PC-3 (cell line): ENCODE measurements at regions of chr2 and their contacts with region 1.

Region 1: DNA sequence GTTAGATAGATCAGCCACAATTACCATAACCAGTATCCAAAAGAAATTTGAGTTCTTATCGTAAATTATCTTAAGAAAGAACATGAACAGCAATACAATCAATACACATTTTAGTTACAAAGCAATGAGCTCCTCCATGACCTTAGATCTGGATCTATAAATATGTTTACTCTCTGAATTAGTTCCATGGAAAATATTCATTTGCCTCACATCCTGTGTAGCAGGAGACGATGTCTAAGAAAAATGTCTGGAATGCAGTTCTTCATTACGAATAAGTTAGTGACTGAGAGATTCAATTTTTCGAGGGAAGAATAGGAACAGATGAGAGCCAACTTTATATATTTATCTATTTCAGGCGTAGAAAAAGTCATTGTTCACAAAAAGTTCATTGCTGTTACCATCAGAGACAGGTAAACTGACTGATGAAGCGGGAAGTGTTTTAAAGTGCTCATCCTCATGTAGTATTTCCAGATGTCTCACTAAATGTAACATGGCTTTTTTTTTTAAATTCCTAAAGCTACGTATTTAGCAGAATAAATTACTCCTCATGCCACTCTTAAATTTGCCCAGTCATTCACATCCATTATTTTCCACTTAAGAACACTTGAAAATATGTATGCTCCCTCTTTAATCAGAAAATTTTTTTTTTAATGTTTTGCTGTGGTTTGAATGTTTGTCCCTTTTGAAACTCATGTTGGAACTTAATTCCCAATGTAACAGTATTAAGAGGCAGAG is 106.5 kb upstream of the SCN1A start:
- DNase-seq: peak; percentile 97
- ATAC-seq: peak; percentile 64
- H3K4me3 ChIP-seq: peak overlapping the region; percentile 14; the same call in 1 of the 2 replicates
- H3K27ac ChIP-seq: peak overlapping the region; percentile 80
- H3K4me1 ChIP-seq: peaks cover 71% of the 10 kb centered on the region
- H3K27me3 ChIP-seq: no peaks in the 10 kb centered on the region
- CTCF ChIP-seq: no peak

Region 2: DNA sequence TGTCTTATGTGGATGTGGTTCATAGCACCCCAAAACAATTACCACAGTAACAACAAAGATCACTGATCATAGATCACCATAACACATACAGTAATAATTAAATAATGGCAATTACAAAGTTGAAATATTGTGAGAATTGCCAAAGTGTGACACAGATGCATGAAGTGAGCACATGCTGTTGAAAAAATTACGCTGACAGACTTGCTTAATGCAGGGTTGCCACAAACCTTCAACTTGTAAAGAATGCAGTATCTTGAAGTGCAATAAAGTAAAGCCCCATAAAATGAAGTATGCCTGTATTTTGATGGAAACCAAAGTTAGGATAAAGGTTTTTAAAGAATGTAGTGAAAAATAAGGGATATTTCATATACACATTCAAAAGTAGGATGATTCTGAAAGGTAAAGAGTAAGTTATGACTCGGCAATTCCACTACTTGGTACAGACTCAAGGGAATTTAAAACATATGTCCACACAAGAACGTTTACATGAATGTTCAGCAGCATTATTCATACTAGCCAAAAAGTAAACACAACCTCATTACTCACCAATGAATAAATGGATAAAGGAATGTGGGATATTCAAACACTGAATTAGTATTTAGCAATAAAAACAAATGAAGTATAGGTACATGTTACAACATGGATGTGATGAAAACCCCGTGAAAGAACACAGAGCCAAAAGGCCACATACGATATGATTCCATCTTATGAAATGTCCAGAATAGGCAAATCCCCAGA is 79.9 kb after region 1 on chr2:
- CTCF ChIA-PET with region 1: no interaction called
- POLR2A ChIA-PET with region 1: no interaction called
- intact Hi-C with region 1: loop called (anchors 1 kb)
- DNase-seq: peak; percentile 90
- ATAC-seq: peak; percentile 100
- H3K4me3 ChIP-seq: no peak overlapping the region
- H3K27ac ChIP-seq: peak overlapping the region; percentile 41
- H3K4me1 ChIP-seq: peaks cover 15% of the 10 kb centered on the region
- H3K27me3 ChIP-seq: no peaks in the 10 kb centered on the region
- CTCF ChIP-seq: no peak

Region 3: GRCh38 chr2:166436189-166436588 is 201.9 kb after region 1 on chr2:
- CTCF ChIA-PET with region 1: no interaction called
- POLR2A ChIA-PET with region 1: no interaction called
- intact Hi-C with region 1: no loop called
- DNase-seq: no peak
- ATAC-seq: no peak
- H3K4me3 ChIP-seq: no peak overlapping the region
- H3K27ac ChIP-seq: no peak overlapping the region
- H3K4me1 ChIP-seq: no peaks in the 10 kb centered on the region
- H3K27me3 ChIP-seq: peaks cover 35% of the 10 kb centered on the region
- CTCF ChIP-seq: no peak